Activated naive CD4-positive, alpha-beta T cell treated with anti-CD3 and anti-CD28 coated beads for 36 hours (primary cell): ENCODE measurements at regions of chr1 and their contacts with region 1.

Region 1: DNA sequence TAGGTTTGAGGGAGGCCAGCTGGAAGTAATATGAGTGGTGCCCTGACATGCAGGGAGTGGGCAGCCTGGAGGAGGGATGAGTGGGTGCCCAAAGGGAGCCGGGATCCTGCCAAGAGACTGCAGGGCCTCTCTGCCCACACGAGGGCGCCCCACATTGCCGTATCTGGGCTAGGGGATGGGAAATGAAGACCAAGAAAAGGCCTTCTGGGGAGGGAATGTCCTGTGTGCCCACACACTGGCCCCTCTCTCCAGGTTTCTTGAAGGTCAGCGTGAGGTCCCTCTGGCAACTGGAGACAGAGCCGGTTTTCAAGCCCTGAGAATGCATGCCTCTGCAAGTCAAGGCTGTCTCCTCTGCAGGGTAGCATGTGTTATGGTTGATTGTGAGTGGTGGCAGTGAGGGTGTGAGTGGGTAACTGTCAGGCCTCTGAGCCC is 94.1 kb upstream of the PPM1J start:
- DNase-seq: peak; percentile 85
- H3K4me3 Mint-ChIP-seq: no peak overlapping the region
- H3K27ac Mint-ChIP-seq: no peak overlapping the region
- H3K4me1 Mint-ChIP-seq: no peaks in the 10 kb centered on the region
- H3K27me3 Mint-ChIP-seq: peaks cover 2% of the 10 kb centered on the region

Region 2: GRCh38 chr1:113042285-113043143 is 233.2 kb after region 1 on chr1:
- CTCF ChIA-PET with region 1: interaction called, 5 read pairs
- intact Hi-C with region 1: loop called (anchors 1 kb)
- DNase-seq: peak; percentile 65
- H3K4me3 Mint-ChIP-seq: no peak overlapping the region
- H3K27ac Mint-ChIP-seq: peak overlapping the region; percentile 73
- H3K4me1 Mint-ChIP-seq: peaks cover 26% of the 10 kb centered on the region
- H3K27me3 Mint-ChIP-seq: peaks cover 2% of the 10 kb centered on the region

Region 3: DNA sequence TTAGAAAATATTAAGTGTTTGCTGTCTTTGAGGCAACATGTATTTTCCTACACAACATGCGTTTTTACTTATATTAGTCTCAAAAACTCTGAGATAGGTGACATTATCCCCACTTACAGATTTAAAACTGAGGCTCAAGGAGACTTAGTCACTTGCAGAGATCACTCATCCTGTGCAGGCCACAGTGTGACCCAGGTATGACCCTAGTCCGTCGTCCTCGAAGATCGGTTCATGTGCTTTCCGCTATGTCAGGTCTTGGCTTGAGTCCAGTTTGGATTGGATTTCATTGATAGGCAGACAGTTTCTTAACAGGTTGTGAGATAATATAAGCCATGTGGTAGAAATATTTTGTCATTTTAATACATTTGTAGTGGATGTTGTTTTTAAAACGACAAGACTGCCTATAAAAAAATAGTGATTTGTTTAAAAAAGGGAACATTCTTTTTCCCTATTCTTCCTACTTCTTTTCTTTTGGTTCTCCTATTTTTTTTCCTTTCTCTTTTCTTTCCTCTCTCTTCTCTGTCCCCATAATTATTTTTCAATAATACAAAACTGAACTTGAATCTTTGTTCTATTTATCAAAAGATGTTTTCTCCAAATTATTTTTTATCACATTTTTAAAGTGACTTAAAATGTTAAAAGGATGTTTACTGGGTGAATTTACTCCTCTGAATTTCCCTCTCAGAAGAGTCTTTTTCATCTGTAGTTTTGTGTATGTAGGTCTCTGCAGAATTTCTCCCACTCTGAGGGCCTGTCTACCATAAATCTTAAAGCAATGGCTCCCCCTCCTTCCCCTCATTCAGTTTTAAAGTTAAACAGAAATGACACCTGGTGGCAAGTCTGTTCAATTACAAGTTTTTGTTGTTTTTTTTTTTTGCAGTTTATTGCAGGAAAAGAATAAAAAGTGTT is 868.2 kb after region 1 on chr1:
- CTCF ChIA-PET with region 1: no interaction called
- intact Hi-C with region 1: loop called (anchors 2 kb)
- DNase-seq: no peak
- H3K4me3 Mint-ChIP-seq: no peak overlapping the region
- H3K27ac Mint-ChIP-seq: no peak overlapping the region
- H3K4me1 Mint-ChIP-seq: no peaks in the 10 kb centered on the region
- H3K27me3 Mint-ChIP-seq: no peaks in the 10 kb centered on the region